HepG2 (cell line): ENCODE measurements at regions of chr3 and their contacts with region 1.

Region 1: GRCh38 chr3:79361748-79362378 is 405.9 kb downstream of the ROBO1 start:
- DNase-seq: peak; percentile 31
- ATAC-seq: peak; percentile 62
- H3K4me3 ChIP-seq: no peak overlapping the region
- H3K27ac ChIP-seq: no peak overlapping the region
- H3K4me1 ChIP-seq: no peaks in the 10 kb centered on the region
- H3K27me3 ChIP-seq: no peaks in the 10 kb centered on the region
- CTCF ChIP-seq: peak; percentile 63
- EP300 ChIP-seq: no peak
- POLR2A ChIP-seq: no peak
- RAD21 ChIP-seq: no peak

Region 2: DNA sequence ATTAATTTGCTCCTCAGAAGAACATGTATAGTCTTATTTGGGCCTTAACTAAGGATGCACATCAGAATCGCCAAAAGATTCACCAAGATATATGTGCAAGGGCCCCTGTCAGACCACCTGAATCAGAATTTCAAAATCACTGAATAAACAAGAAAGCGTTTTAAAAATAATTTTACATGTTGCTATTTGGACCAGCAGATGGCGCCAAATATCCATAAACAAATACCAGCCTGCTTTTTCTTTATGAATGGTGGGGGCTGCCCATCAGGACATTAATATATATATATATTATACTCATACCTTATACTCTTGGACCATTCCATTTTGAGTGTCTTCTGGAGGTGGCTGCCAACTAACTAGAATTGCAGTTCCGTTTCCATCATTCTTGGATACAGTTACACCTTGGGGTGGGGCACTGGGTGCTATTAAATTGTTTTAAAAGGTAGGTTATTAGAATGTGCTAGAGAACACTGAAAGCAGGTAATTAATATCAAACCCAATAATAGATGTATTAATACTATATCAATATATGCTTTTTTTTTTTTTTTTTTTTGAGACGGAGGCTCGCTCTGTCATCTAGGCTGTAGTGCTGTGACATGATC is 702.4 kb before region 1 on chr3:
- CTCF ChIA-PET with region 1: interaction called, 3 read pairs
- POLR2A ChIA-PET with region 1: no interaction called
- in situ Hi-C with region 1: loop called (anchors 25 kb)
- intact Hi-C with region 1: no loop called
- DNase-seq: peak; percentile 29
- ATAC-seq: no peak; the same call in 2 of the 3 replicates
- H3K4me3 ChIP-seq: no peak overlapping the region
- H3K27ac ChIP-seq: no peak overlapping the region
- H3K4me1 ChIP-seq: no peaks in the 10 kb centered on the region
- H3K27me3 ChIP-seq: no peaks in the 10 kb centered on the region
- CTCF ChIP-seq: peak; percentile 58
- EP300 ChIP-seq: no peak
- POLR2A ChIP-seq: no peak
- RAD21 ChIP-seq: peak; percentile 36

Region 3: GRCh38 chr3:79074558-79074957 is 287.3 kb before region 1 on chr3:
- CTCF ChIA-PET with region 1: no interaction called
- POLR2A ChIA-PET with region 1: no interaction called
- in situ Hi-C with region 1: no loop called
- intact Hi-C with region 1: no loop called
- DNase-seq: no peak
- ATAC-seq: no peak
- H3K4me3 ChIP-seq: no peak overlapping the region
- H3K27ac ChIP-seq: no peak overlapping the region
- H3K4me1 ChIP-seq: no peaks in the 10 kb centered on the region
- H3K27me3 ChIP-seq: no peaks in the 10 kb centered on the region; a peak in 1 of 5 replicates
- CTCF ChIP-seq: no peak
- EP300 ChIP-seq: no peak
- POLR2A ChIP-seq: no peak
- RAD21 ChIP-seq: no peak

Region 4: GRCh38 chr3:79086514-79086913 is 275.3 kb before region 1 on chr3:
- CTCF ChIA-PET with region 1: interaction called, 18 read pairs
- POLR2A ChIA-PET with region 1: no interaction called
- in situ Hi-C with region 1: loop called (anchors 10 kb)
- intact Hi-C with region 1: loop called (anchors 1 kb)
- DNase-seq: peak; percentile 53
- ATAC-seq: peak; percentile 84
- H3K4me3 ChIP-seq: no peak overlapping the region; a peak in 1 of 6 replicates
- H3K27ac ChIP-seq: no peak overlapping the region
- H3K4me1 ChIP-seq: peaks cover 2% of the 10 kb centered on the region; the same call in 1 of the 2 replicates
- H3K27me3 ChIP-seq: peaks cover 0 to 6% of the 10 kb centered on the region in 2 experiments; a peak in 1 of 5 replicates
- CTCF ChIP-seq: peak; percentile 71
- EP300 ChIP-seq: no peak
- POLR2A ChIP-seq: no peak
- RAD21 ChIP-seq: 0 out of 2 replicates have a peak, but pooled peaks have one; percentile 24

Region 5: GRCh38 chr3:79497447-79498111 is 135.7 kb after region 1 on chr3:
- CTCF ChIA-PET with region 1: no interaction called
- POLR2A ChIA-PET with region 1: no interaction called
- in situ Hi-C with region 1: no loop called
- intact Hi-C with region 1: loop called (anchors 1 kb)
- DNase-seq: no peak
- ATAC-seq: no peak
- H3K4me3 ChIP-seq: no peak overlapping the region
- H3K27ac ChIP-seq: no peak overlapping the region
- H3K4me1 ChIP-seq: no peaks in the 10 kb centered on the region
- H3K27me3 ChIP-seq: no peaks in the 10 kb centered on the region
- CTCF ChIP-seq: peak; percentile 51
- EP300 ChIP-seq: no peak
- POLR2A ChIP-seq: no peak
- RAD21 ChIP-seq: no peak